CD8-positive, alpha-beta T cell (primary cell): ENCODE measurements at regions of chr14 and their contacts with region 1.

Region 1: GRCh38 chr14:99192028-99192621 is 79.9 kb downstream of the BCL11B start:
- DNase-seq: peak in 3 of 9 experiments; percentile 55 to 75 (median 64)
- ATAC-seq: peak; percentile 38
- H3K4me3 ChIP-seq: peak overlapping the region; percentile 36 to 44
- H3K4me3 Mint-ChIP-seq: peak overlapping the region; percentile 87
- H3K27ac ChIP-seq: peak overlapping the region; percentile 71 to 76
- H3K27ac Mint-ChIP-seq: peak overlapping the region; percentile 99
- H3K4me1 ChIP-seq: peaks cover 97% of the 10 kb centered on the region
- H3K4me1 Mint-ChIP-seq: peaks cover 96% of the 10 kb centered on the region
- H3K27me3 ChIP-seq: no peaks in the 10 kb centered on the region
- H3K27me3 Mint-ChIP-seq: no peaks in the 10 kb centered on the region
- CTCF ChIP-seq: no peak

Region 2: DNA sequence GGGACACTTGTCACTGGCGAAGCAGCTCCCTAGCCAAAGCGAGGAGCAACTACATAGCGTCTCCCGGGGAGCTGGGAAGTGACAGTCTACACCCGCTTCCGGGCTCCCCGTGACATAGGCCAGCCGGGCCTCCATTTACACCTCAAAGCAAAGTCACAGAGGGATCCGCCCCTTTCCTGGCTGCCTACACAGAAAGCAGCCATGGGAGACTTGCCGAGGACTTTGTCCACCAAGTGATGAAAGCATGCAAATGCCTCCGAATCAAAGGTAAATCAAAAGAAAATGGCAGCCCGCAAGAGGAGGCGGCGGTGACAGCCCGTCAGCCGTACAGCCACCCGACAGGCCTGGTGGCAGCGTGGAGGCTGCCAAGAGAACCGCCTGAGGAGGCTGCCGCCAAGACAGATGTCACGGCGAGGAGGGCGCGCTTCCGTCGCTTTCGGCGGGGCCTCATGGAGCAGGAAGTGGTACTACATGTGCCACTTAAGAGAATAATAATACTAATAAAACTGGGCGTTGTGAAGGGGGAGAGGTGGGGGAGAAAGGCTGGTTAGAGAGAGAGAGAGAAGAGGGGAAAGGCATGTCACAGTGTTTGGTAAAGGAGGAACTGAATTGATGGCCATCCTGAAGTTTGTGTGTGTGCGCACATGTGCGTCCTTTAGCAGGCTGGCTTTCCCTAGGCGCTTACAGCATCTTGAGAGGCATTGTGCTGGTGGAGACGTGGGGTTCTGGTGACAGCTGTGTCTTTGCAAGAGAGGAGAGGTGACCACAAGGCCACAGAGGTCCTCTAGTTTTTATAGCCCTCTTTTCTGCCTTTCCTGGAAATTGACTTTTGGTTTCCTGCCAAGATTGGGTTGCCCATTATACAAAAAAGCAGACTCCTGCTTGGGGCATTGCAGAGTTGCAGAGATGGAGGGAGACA is 1733.2 kb before region 1 on chr14:
- CTCF ChIA-PET with region 1: no interaction called
- POLR2A ChIA-PET with region 1: no interaction called
- intact Hi-C with region 1: loop called in 1 of 2 experiments (anchors 5 kb)
- DNase-seq: peak; percentile 60 to 92 (median 84)
- ATAC-seq: peak; percentile 81
- H3K4me3 ChIP-seq: peak overlapping the region; percentile 53 to 62
- H3K4me3 Mint-ChIP-seq: peak overlapping the region; percentile 88
- H3K27ac ChIP-seq: peak overlapping the region; percentile 82 to 88
- H3K27ac Mint-ChIP-seq: peak overlapping the region; percentile 97
- H3K4me1 ChIP-seq: peaks cover 34% of the 10 kb centered on the region
- H3K4me1 Mint-ChIP-seq: peaks cover 75% of the 10 kb centered on the region
- H3K27me3 ChIP-seq: no peaks in the 10 kb centered on the region
- H3K27me3 Mint-ChIP-seq: no peaks in the 10 kb centered on the region
- CTCF ChIP-seq: no peak

Region 3: GRCh38 chr14:98198385-98198784 is 993.7 kb before region 1 on chr14:
- CTCF ChIA-PET with region 1: no interaction called
- POLR2A ChIA-PET with region 1: no interaction called
- intact Hi-C with region 1: loop called (anchors 2 to 10 kb)
- DNase-seq: peak in 7 of 9 experiments; percentile 35 to 79 (median 60)
- ATAC-seq: peak; percentile 42
- H3K4me3 ChIP-seq: peak overlapping the region in 1 of 2 experiments; percentile 12
- H3K4me3 Mint-ChIP-seq: peak overlapping the region; percentile 54
- H3K27ac ChIP-seq: peak overlapping the region in 1 of 2 experiments; percentile 51
- H3K27ac Mint-ChIP-seq: peak overlapping the region; percentile 85
- H3K4me1 ChIP-seq: peaks cover 68% of the 10 kb centered on the region
- H3K4me1 Mint-ChIP-seq: peaks cover 93% of the 10 kb centered on the region
- H3K27me3 ChIP-seq: no peaks in the 10 kb centered on the region
- H3K27me3 Mint-ChIP-seq: no peaks in the 10 kb centered on the region
- CTCF ChIP-seq: no peak

Region 4: DNA sequence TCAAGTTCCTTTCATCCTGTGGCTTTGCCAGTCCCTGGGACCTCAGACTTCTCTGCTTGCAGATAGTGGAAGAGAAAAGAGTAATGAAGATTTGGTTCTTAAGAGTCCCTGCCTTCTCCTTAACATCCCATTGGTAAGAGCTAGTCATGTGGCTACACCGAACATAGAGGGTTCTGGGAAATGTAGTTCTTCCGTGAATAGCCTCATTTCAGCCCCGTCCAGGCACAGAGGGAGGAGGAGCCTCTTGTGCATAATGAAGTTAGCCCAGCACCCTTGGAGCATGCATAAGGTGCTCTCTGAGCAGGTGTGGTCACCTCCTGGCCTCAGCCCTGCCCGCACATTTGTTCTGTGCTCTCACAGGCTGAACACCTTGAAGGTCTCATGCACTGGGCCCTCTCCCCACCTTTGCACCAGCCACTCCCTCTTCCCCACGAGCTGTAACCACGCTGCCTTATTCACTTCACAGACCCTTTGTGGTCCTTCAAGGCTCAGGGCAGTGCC is 54.1 kb before region 1 on chr14:
- CTCF ChIA-PET with region 1: no interaction called
- POLR2A ChIA-PET with region 1: no interaction called
- intact Hi-C with region 1: no loop called
- DNase-seq: peak in 3 of 9 experiments; percentile 8 to 62 (median 55)
- ATAC-seq: peak; percentile 83
- H3K4me3 ChIP-seq: peak overlapping the region; percentile 15 to 36
- H3K4me3 Mint-ChIP-seq: peak overlapping the region; percentile 67
- H3K27ac ChIP-seq: no peak overlapping the region
- H3K27ac Mint-ChIP-seq: no peak overlapping the region
- H3K4me1 ChIP-seq: peaks cover 10% of the 10 kb centered on the region
- H3K4me1 Mint-ChIP-seq: peaks cover 27% of the 10 kb centered on the region
- H3K27me3 ChIP-seq: no peaks in the 10 kb centered on the region
- H3K27me3 Mint-ChIP-seq: no peaks in the 10 kb centered on the region
- CTCF ChIP-seq: no peak

Region 5: GRCh38 chr14:99205086-99205688 is 13.1 kb after region 1 on chr14:
- CTCF ChIA-PET with region 1: interaction called, 8 read pairs
- POLR2A ChIA-PET with region 1: interaction called, 14 read pairs
- intact Hi-C with region 1: loop called in 1 of 2 experiments (anchors 1 kb)
- DNase-seq: no peak
- ATAC-seq: no peak
- H3K4me3 ChIP-seq: no peak overlapping the region
- H3K4me3 Mint-ChIP-seq: peak overlapping the region; percentile 70
- H3K27ac ChIP-seq: peak overlapping the region; percentile 21 to 62
- H3K27ac Mint-ChIP-seq: peak overlapping the region; percentile 99
- H3K4me1 ChIP-seq: peaks cover 100% of the 10 kb centered on the region
- H3K4me1 Mint-ChIP-seq: peaks cover 100% of the 10 kb centered on the region
- H3K27me3 ChIP-seq: no peaks in the 10 kb centered on the region
- H3K27me3 Mint-ChIP-seq: no peaks in the 10 kb centered on the region
- CTCF ChIP-seq: no peak

Region 6: GRCh38 chr14:99415496-99416281 is 223.6 kb after region 1 on chr14:
- CTCF ChIA-PET with region 1: no interaction called
- POLR2A ChIA-PET with region 1: no interaction called
- intact Hi-C with region 1: loop called in 1 of 2 experiments (anchors 10 kb)
- DNase-seq: peak; percentile 33 to 90 (median 64)
- ATAC-seq: peak; percentile 99
- H3K4me3 ChIP-seq: no peak overlapping the region
- H3K4me3 Mint-ChIP-seq: no peak overlapping the region
- H3K27ac ChIP-seq: no peak overlapping the region
- H3K27ac Mint-ChIP-seq: no peak overlapping the region
- H3K4me1 ChIP-seq: no peaks in the 10 kb centered on the region
- H3K4me1 Mint-ChIP-seq: peaks cover 5% of the 10 kb centered on the region
- H3K27me3 ChIP-seq: no peaks in the 10 kb centered on the region
- H3K27me3 Mint-ChIP-seq: no peaks in the 10 kb centered on the region
- CTCF ChIP-seq: peak; percentile 92